Activated CD8-positive, alpha-beta memory T cell treated with anti-CD3 and anti-CD28 coated beads, Interleukin-2, amount 10 ng/mL, durations not matched to agents 7 days and 5 days (primary cell): ENCODE measurements at regions of chr6 and their contacts with region 1.

Region 1: GRCh38 chr6:109382576-109383437 is 540 bp upstream of the CD164 start:
- DNase-seq: peak; percentile 95
- ATAC-seq: peak; percentile 70
- H3K4me3 Mint-ChIP-seq: peak overlapping the region; percentile 92
- H3K27ac Mint-ChIP-seq: peak overlapping the region; percentile 100
- H3K4me1 Mint-ChIP-seq: peaks cover 24% of the 10 kb centered on the region
- H3K27me3 Mint-ChIP-seq: no peaks in the 10 kb centered on the region

Region 2: DNA sequence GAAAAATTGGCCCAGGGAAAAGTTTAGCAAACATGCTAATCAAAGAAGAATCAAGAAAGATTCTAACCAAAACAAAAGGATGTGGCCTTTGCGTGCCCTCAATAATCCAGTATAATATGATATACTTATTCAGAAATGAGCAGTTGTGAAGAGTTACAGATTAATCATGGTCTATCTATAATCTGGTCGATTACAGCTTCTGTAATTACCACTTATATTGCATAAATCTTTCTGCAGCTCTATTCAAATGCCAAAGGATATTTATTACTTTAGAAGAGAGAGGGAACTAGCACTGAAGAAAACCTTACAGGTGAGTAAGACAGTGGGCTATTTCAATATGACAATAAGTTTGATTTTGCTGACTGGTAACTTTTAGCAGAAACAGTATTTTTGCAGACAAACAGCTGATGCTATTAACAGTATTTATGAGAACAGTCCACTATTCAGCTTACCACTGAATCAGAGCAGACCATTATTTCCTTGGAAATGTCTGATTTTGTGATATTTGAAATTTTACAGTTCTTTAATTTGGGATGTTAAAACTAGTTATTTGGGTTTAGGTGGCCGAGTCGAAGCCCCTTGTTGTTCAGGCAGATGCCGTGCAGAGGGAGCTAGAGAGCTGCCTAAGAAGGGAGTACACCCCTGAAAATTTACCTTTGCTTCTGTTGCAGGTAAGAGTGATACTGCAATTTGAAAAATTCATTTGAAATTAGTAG is 195.2 kb before region 1 on chr6:
- CTCF ChIA-PET with region 1: interaction called, 84 read pairs
- DNase-seq: peak; percentile 67
- ATAC-seq: peak; percentile 65
- H3K4me3 Mint-ChIP-seq: no peak overlapping the region
- H3K27ac Mint-ChIP-seq: no peak overlapping the region
- H3K4me1 Mint-ChIP-seq: peaks cover 20% of the 10 kb centered on the region
- H3K27me3 Mint-ChIP-seq: peaks cover 46% of the 10 kb centered on the region

Region 3: GRCh38 chr6:109393888-109394285 is 11.1 kb after region 1 on chr6:
- CTCF ChIA-PET with region 1: interaction called, 15 read pairs
- DNase-seq: no peak
- ATAC-seq: no peak
- H3K4me3 Mint-ChIP-seq: no peak overlapping the region
- H3K27ac Mint-ChIP-seq: no peak overlapping the region
- H3K4me1 Mint-ChIP-seq: peaks cover 7% of the 10 kb centered on the region
- H3K27me3 Mint-ChIP-seq: no peaks in the 10 kb centered on the region

Region 4: GRCh38 chr6:109440331-109441068 is 57.7 kb after region 1 on chr6 and contains the starts of genes PPIL6 and SMPD2:
- CTCF ChIA-PET with region 1: interaction called, 24 read pairs
- DNase-seq: peak; percentile 84
- ATAC-seq: peak; percentile 93
- H3K4me3 Mint-ChIP-seq: peak within 1 kb of the TSS; percentile 88
- H3K27ac Mint-ChIP-seq: peak within 1 kb of the TSS; percentile 77
- H3K4me1 Mint-ChIP-seq: peaks cover 29% of the 10 kb centered on the region
- H3K27me3 Mint-ChIP-seq: no peaks in the 10 kb centered on the region
- total RNA-seq, gene PPIL6: 0.21 TPM in 1 of 2 experiments, not detected in the other
- total RNA-seq, gene SMPD2: 14.3 to 14.6 TPM